Adrenal gland (tissue), 19 donors: ENCODE measurements at regions of chr17 and their contacts with region 1.

Region 1: DNA sequence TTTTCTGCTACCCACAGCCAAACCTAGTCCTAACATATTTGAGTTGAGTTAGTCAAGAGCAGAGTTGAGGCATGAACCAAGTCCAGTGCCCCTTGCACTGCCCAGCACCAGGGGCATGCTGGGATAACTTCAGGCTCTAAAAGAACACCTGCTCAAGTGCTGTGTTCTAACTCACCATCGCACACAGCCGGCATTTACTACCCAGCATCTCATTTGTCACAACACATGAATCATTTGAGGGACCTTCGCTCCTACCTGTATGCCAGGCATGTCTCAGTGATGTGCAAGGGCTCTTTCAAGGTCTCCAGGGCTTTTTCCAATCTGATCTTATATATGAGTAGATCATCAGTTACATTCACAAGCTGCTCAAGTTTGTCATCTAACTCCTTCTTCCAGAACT is 12.6 kb downstream of the TEKT1 start:
- DNase-seq: no peak
- H3K4me3 ChIP-seq: no peak overlapping the region
- H3K27ac ChIP-seq: no peak overlapping the region
- H3K4me1 ChIP-seq: no peaks in the 10 kb centered on the region
- H3K27me3 ChIP-seq: peaks cover 4% of the 10 kb centered on the region
- CTCF ChIP-seq: no peak
- POLR2A ChIP-seq: no peak

Region 2: DNA sequence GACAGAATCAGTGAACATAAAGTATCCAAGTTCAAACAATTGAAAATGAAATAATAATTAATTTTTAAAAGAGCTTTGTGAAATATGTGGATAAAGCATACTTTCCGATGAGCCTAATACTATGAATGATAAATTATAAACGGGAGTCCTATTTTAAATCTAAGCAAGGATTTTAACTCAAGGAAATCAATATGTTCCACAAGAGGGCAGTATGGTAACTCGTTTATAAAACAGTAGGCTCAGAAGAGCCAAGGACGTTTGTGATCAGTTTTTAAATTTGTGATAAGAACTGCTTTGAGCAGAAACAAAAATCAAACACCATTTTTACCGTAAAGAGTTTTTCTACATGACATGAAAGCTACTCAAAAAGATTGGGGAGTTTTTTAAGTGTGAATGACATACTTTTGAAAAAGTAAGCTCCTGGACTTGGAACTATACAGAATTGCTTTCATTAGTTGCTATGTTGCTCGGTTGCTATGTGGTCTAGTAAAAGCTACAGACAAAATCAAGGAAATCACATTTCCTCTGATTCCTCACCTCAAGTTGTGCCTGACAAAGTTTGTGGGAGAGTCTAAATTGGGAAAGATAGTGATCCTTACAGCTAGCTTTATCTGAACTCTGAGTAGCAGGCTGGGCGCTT is 24.4 kb after region 1 on chr17:
- intact Hi-C with region 1: loop called in 1 of 2 experiments (anchors 2 kb)
- DNase-seq: no peak
- H3K4me3 ChIP-seq: no peak overlapping the region
- H3K27ac ChIP-seq: no peak overlapping the region
- H3K4me1 ChIP-seq: peaks cover 0 to 5% of the 10 kb centered on the region in 2 donors
- H3K27me3 ChIP-seq: peaks cover 14% of the 10 kb centered on the region
- CTCF ChIP-seq: peak; percentile 33 to 62 (median 58)
- POLR2A ChIP-seq: no peak